ENCODE measurements at regions of chr2 and their contacts with region 1.

Region 1: DNA sequence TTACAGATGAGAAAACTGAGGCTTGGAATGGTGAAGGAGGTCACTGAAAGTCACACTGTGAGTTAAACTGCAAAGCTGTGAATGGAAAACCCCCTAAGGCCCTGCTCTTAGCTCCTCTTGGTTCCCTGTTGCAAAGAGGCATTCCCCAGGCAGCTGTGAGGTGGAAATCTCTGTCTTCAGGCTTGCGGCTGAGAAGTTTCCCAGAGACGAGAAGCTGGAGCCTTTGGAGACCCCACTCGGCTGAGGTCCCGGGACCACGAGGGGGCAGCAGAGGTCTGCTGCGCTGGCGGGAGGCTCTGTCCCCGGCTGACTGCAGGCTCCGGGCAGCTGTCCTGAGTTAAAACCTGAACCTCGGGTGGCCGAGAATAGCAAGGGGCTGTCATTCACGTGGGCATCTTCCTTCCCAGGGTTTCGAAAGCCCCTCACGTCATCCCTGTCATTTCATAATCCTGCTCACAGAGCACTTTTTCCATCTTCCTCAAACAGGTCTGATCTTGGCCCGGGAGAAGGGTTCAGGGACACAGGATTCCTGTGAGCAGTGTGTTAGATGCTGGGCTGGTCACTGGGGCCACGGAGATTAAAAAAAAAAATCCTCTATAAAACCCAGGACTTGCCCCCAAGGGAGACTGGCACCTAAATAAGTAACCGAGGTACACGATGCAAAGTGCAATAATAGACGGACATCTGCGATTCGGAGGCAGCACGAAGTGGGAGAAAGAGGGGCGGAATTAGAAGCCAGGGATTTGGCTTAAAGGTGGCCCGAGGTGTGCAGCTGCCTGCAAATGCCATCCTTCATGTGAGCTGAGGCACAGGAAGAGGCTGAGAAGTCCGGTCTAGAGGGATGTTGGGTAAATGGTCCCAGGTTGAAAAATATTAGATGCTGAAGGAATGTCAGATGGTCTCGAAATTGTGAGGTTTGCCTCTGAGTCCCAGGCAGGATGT is 24.6 kb upstream of the ATOH8 start:
- DNase-seq: peak; percentile 86 to 90 (median 89)
- ATAC-seq: peak; percentile 96
- H3K4me3 ChIP-seq: no peak overlapping the region
- H3K27ac ChIP-seq: peak overlapping the region in 1 of 4 donors; percentile 5
- H3K4me1 ChIP-seq: peaks cover 8% of the 10 kb centered on the region
- H3K27me3 ChIP-seq: no peaks in the 10 kb centered on the region
- CTCF ChIP-seq: peak; percentile 91 to 98 (median 94)
- POLR2A ChIP-seq: no peak

Region 2: DNA sequence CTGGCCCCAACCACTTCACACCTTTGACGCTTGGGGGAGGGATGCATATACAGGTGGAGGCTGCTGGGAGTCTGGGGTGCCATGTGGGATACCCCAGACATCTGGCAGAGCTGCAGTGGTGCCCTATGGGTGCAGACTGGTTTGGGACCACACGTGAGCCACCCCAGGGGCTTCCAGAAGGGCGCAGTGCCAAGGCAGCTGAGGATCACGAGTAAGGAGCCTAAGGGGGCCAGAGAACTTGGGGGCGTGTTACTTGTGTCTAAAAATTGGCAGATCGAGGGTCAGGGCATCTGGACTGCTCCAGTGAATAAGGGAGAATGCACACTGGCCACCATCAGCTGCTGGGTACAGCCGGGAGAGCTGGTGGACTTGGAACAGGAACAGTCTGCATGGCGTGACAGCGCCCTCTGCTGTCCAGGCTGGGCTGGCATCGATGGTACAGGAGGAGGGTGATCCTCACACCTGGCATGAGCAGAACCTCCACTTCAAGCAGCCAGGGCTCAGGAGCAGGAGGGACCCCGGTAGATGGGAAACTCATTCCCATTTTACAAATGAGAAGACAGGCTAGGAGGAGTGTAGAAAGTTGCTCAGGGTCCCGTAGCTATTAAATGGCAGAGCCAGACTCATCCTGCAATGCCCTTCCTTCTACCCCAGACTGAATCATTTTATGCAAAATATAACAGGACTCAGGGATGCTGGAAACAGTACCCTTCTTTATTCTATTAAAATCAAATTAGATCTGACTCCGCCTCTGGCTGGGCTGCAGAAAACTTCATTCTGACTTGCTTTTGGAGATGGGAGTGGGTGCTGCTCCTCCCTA is 85.0 kb after region 1 on chr2:
- intact Hi-C with region 1: loop called (anchors 5 kb)
- DNase-seq: peak; percentile 93 to 95 (median 94)
- ATAC-seq: peak; percentile 95
- H3K4me3 ChIP-seq: no peak overlapping the region
- H3K27ac ChIP-seq: peak overlapping the region in 3 of 4 donors; percentile 6 to 21 (median 15)
- H3K4me1 ChIP-seq: peaks cover 10% of the 10 kb centered on the region
- H3K27me3 ChIP-seq: no peaks in the 10 kb centered on the region
- CTCF ChIP-seq: peak; percentile 93 to 98 (median 97)
- POLR2A ChIP-seq: no peak

Region 3: DNA sequence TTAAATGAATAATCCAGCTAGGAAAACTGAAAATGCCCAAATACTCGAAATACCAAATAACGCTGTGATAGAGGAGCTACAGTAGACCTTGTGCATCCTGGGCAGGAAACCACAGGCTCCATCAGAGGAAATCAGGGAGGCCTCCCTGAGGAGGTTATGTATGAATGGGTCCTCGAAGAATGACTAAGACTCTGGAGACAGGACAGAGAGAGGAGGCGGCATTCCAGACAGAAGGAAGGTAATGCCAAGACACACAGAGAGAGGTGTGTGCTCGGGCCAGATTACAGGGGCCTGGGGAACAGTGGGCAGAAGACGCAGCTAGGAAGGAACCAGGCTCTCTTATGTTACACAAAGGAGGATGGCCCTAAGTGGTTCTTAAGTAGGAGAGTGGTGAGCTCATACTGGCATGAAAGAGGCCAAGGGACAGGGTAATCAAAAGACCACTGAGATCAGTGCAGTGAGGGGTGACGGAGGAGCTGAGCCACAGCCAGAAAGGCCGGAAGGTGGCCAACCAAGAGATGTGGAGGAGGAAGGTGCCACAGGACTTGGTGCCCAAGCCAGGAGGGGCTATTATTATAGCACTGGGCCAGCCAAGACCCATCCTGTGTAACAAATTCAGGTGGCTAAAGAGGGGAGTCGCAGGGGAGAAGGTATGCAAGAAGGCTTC is 149.7 kb after region 1 on chr2:
- intact Hi-C with region 1: no loop called
- DNase-seq: no peak
- ATAC-seq: no peak
- H3K4me3 ChIP-seq: no peak overlapping the region
- H3K27ac ChIP-seq: no peak overlapping the region
- H3K4me1 ChIP-seq: peaks cover 14% of the 10 kb centered on the region
- H3K27me3 ChIP-seq: no peaks in the 10 kb centered on the region
- CTCF ChIP-seq: no peak
- POLR2A ChIP-seq: no peak

Region 4: DNA sequence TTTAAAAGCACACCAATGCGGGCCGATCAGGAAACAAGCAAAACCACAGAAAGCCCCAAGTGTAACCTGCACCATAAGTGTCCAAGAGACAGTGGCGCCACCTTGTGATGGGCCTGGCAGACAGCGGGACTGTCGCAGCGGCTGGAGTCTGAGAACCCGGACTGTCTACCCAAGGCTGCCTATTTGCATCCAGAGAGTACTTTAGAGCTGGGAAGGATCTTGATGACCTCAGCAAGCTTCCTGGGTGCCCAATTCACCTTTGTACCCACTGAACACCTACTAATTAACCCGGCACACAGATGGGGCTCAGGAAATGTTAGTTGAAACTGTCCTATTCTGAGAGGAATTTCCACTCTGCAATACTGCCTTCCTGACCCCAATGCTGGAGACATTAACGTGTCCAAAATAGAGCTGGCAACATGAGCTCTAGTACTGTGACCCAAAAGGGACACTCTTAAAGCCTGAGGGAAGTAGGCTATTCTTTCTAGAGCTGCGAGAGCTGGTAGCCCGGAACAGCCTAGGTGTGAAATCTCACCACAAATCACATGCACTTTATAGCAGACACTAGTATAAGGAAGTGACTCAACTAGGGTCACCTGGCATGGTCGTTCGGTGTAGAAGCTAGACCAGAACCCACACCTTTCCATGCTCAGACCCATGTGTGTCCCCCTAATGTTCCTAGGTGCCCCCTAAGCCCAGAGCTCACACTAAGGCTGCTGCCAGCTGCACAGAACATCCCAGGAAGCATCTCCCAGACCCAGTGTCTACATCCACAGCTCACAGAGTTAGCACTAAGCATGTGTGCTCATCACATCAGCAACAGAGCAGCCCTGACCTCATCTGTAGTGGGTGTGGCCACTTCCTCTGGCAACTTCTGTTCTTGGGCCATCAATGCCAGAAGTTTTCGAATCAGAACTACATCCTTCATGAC is 351.1 kb after region 1 on chr2:
- intact Hi-C with region 1: loop called (anchors 10 kb)
- DNase-seq: peak; percentile 84 to 91 (median 86)
- ATAC-seq: peak; percentile 81
- H3K4me3 ChIP-seq: no peak overlapping the region
- H3K27ac ChIP-seq: no peak overlapping the region
- H3K4me1 ChIP-seq: no peaks in the 10 kb centered on the region
- H3K27me3 ChIP-seq: no peaks in the 10 kb centered on the region
- CTCF ChIP-seq: peak; percentile 58 to 86 (median 76)
- POLR2A ChIP-seq: no peak